ENCODE measurements at regions of chr4 and their contacts with region 1.

Region 1: GRCh38 chr4:74237425-74237966 is 70.8 kb upstream of the EPGN start:
- DNase-seq: no peak
- H3K4me3 ChIP-seq: no peak overlapping the region
- CTCF ChIP-seq: no peak
- POLR2A ChIP-seq: no peak

Region 2: GRCh38 chr4:74287164-74287563 is 49.7 kb after region 1 on chr4:
- intact Hi-C with region 1: loop called (anchors 2 kb)
- DNase-seq: no peak
- H3K4me3 ChIP-seq: no peak overlapping the region
- CTCF ChIP-seq: no peak
- POLR2A ChIP-seq: no peak

Measured in lower leg skin (tissue), 4 donors.